Dorsolateral prefrontal cortex (tissue), 120 donors: ENCODE measurements at regions of chr9 and their contacts with region 1.

Region 1: DNA sequence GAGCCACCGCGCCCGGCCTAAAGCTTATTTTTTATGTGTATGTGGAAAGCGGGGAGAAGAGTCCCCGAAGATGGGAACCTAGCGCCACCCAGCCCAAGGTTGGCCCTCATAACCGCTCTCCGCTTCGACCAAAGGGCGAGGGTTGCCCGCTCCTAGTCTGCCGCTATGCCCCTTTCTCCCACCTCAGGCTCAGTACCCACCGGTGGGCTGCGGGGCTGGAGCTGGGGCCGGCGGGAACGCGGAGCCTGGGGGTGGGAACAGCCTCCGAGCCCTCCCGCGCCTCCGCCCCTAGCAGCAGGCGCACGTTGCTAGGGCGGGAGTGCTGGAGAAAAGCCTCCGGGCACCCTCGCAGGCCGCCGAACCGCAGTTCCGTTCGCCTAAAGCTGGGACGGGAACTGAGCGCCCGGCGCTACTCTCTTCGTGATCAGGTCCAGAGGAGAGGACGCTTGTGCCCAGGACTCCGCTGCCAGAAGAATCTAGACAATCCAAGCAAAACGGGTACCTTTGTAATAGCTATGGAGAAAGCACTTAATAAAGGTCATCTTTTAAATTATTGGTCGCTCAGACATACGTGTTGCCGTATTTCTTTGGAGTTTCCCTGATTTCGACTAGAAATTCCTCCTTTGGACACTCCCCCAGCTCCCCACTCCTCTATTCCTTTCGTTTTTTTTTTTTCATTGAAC is at the start of gene WDR31:
- DNase-seq: peak; percentile 80 to 93 (median 88)
- H3K4me3 ChIP-seq: peak within 1 kb of the TSS; percentile 58 to 93 (median 79)
- H3K27ac ChIP-seq: peak within 1 kb of the TSS in 58 of 59 donors; percentile 27 to 93 (median 80)
- H3K27me3 ChIP-seq: no peaks in the 10 kb centered on the region
- CTCF ChIP-seq: peak in 48 of 56 donors; percentile 9 to 66 (median 38)
- total RNA-seq, gene WDR31: 2.7 to 12.3 (median 7.0) TPM

Region 2: GRCh38 chr9:113221003-113221799 is 119.0 kb before region 1 on chr9 and contains the starts of genes FKBP15 and SLC31A1:
- intact Hi-C with region 1: no loop called
- DNase-seq: peak; percentile 97 to 99 (median 99)
- H3K4me3 ChIP-seq: peak within 1 kb of the TSS; percentile 61 to 99 (median 85)
- H3K27ac ChIP-seq: peak within 1 kb of the TSS in 55 of 59 donors; percentile 45 to 96 (median 87)
- H3K27me3 ChIP-seq: no peaks in the 10 kb centered on the region
- CTCF ChIP-seq: peak in 40 of 56 donors; percentile 7 to 64 (median 30)
- total RNA-seq, gene FKBP15: 23.3 to 39.3 (median 31.2) TPM
- total RNA-seq, gene SLC31A1: 9.4 to 18.3 (median 13.9) TPM

Region 3: GRCh38 chr9:113281356-113281755 is 58.8 kb before region 1 on chr9:
- intact Hi-C with region 1: no loop called
- DNase-seq: no peak
- H3K4me3 ChIP-seq: no peak overlapping the region
- H3K27ac ChIP-seq: no peak overlapping the region
- H3K27me3 ChIP-seq: no peaks in the 10 kb centered on the region
- CTCF ChIP-seq: no peak

Region 4: GRCh38 chr9:113401027-113401792 is 61.1 kb after region 1 on chr9 and contains the start of gene ALAD:
- intact Hi-C with region 1: loop called (anchors 2 kb)
- DNase-seq: peak; percentile 94 to 100 (median 98)
- H3K4me3 ChIP-seq: peak within 1 kb of the TSS; percentile 68 to 99 (median 91)
- H3K27ac ChIP-seq: peak within 1 kb of the TSS; percentile 36 to 97 (median 89)
- H3K27me3 ChIP-seq: no peaks in the 10 kb centered on the region
- CTCF ChIP-seq: peak; percentile 70 to 99 (median 96)
- total RNA-seq, gene ALAD: 67.7 to 134 (median 89.4) TPM

Region 5: GRCh38 chr9:113410207-113410864 is 70.2 kb after region 1 on chr9 and contains the starts of genes C9orf43 and POLE3:
- intact Hi-C with region 1: loop called in 1 of 2 experiments (anchors 2 kb)
- DNase-seq: peak; percentile 91 to 94 (median 92)
- H3K4me3 ChIP-seq: peak within 1 kb of the TSS; percentile 61 to 100 (median 91)
- H3K27ac ChIP-seq: peak within 1 kb of the TSS; percentile 92 to 100 (median 99)
- H3K27me3 ChIP-seq: no peaks in the 10 kb centered on the region
- CTCF ChIP-seq: peak in 31 of 56 donors; percentile 2 to 61 (median 20)
- total RNA-seq, gene C9orf43: 0.41 to 2.5 (median 1.2) TPM
- total RNA-seq, gene POLE3: 18.6 to 38.2 (median 27.0) TPM

Region 6: GRCh38 chr9:113548221-113549041 is 208.3 kb after region 1 on chr9:
- intact Hi-C with region 1: loop called in 1 of 2 experiments (anchors 10 kb)
- DNase-seq: peak in 6 of 10 donors; percentile 41 to 58 (median 53)
- H3K4me3 ChIP-seq: no peak overlapping the region
- H3K27ac ChIP-seq: peak overlapping the region in 56 of 59 donors; percentile 13 to 99 (median 74)
- H3K27me3 ChIP-seq: no peaks in the 10 kb centered on the region
- CTCF ChIP-seq: no peak